ENCODE measurements at regions of chr21 and their contacts with region 1.

Region 1: GRCh38 chr21:36188081-36188681 is 31.6 kb downstream of the DOP1B start:
- DNase-seq: peak; percentile 81 to 93
- H3K4me3 ChIP-seq: peak overlapping the region; percentile 37; the same call in 1 of the 2 replicates
- H3K27ac ChIP-seq: peak overlapping the region; percentile 60
- H3K4me1 ChIP-seq: peaks cover 50% of the 10 kb centered on the region
- H3K27me3 ChIP-seq: no peaks in the 10 kb centered on the region
- CTCF ChIP-seq: no peak

Region 2: GRCh38 chr21:35882791-35883240 is 305.4 kb before region 1 on chr21:
- CTCF ChIA-PET with region 1: no interaction called
- POLR2A ChIA-PET with region 1: no interaction called
- intact Hi-C with region 1: no loop called
- DNase-seq: no peak
- H3K4me3 ChIP-seq: no peak overlapping the region
- H3K27ac ChIP-seq: no peak overlapping the region
- H3K4me1 ChIP-seq: no peaks in the 10 kb centered on the region
- H3K27me3 ChIP-seq: peaks cover 11% of the 10 kb centered on the region
- CTCF ChIP-seq: no peak

Region 3: GRCh38 chr21:36203617-36203917 is 15.4 kb after region 1 on chr21:
- CTCF ChIA-PET with region 1: interaction called, 5 read pairs
- POLR2A ChIA-PET with region 1: interaction called, 4 read pairs
- intact Hi-C with region 1: loop called (anchors 2 kb)
- DNase-seq: peak; percentile 57 to 78
- H3K4me3 ChIP-seq: no peak overlapping the region
- H3K27ac ChIP-seq: peak overlapping the region; percentile 90
- H3K4me1 ChIP-seq: peaks cover 51% of the 10 kb centered on the region
- H3K27me3 ChIP-seq: no peaks in the 10 kb centered on the region
- CTCF ChIP-seq: no peak